Activated CD4-positive, alpha-beta T cell treated with anti-CD3 and anti-CD28 coated beads, Interleukin-2, amount 10 ng/mL, durations not matched to agents 7 days and 5 days (primary cell): ENCODE measurements at regions of chr6 and their contacts with region 1.

Region 1: DNA sequence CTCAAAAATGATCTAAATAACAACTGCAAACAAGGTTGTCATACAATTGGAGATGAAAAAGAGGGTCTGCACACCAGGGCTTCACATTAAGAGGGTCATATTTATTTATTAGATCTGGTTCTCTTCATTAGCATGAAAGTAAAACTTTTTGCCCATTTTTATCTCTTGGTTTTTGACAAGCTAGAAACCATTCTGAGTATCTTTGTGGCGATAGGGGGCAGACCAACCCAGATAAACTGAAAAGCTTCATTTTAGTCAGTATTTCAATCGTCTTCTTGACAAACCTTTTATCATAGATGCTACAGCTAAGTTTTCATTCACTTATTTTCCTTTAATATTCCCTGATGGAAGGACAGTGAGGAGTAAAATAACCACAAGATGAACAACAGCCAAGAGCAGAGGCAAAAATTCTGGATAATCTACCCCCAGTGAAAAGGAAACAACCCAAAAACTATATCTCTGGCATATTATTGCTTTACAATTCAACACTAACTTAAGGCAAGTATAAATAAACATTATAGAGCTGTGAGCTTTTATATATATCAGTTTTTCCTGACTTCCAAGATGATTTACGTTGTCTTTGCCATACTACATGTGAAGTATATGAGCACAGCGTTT is 45.2 kb downstream of the THEMIS start:
- DNase-seq: peak; percentile 55
- H3K4me3 Mint-ChIP-seq: no peak overlapping the region
- H3K27ac Mint-ChIP-seq: peak overlapping the region; percentile 44
- H3K4me1 Mint-ChIP-seq: peaks cover 57% of the 10 kb centered on the region
- H3K27me3 Mint-ChIP-seq: no peaks in the 10 kb centered on the region

Region 2: GRCh38 chr6:127844529-127844928 is 11.1 kb before region 1 on chr6:
- CTCF ChIA-PET with region 1: interaction called, 13 read pairs
- POLR2A ChIA-PET with region 1: no interaction called
- DNase-seq: no peak
- H3K4me3 Mint-ChIP-seq: no peak overlapping the region
- H3K27ac Mint-ChIP-seq: no peak overlapping the region
- H3K4me1 Mint-ChIP-seq: peaks cover 27% of the 10 kb centered on the region
- H3K27me3 Mint-ChIP-seq: no peaks in the 10 kb centered on the region

Region 3: DNA sequence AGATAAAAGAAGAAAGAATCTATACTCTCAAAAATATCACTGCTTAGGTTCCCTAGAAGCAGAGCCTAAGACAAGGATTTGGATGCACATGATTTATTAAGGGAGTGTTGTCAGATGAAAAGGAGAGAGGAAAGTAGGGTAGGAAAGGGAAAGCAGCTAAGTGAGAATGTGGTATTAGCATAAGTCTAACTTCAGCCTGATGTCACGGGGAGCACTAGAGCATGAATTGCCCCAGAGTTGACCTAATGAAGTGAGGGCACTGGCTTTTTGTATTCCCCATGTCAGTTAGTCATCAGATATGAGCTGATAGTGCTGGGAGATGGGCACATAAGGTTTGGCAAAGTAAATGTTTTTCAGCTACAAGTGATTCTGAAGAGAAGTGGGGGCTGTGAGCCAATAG is 174.2 kb after region 1 on chr6:
- CTCF ChIA-PET with region 1: no interaction called
- POLR2A ChIA-PET with region 1: no interaction called
- DNase-seq: no peak
- H3K4me3 Mint-ChIP-seq: no peak overlapping the region
- H3K27ac Mint-ChIP-seq: no peak overlapping the region
- H3K4me1 Mint-ChIP-seq: peaks cover 27% of the 10 kb centered on the region
- H3K27me3 Mint-ChIP-seq: no peaks in the 10 kb centered on the region

Region 4: DNA sequence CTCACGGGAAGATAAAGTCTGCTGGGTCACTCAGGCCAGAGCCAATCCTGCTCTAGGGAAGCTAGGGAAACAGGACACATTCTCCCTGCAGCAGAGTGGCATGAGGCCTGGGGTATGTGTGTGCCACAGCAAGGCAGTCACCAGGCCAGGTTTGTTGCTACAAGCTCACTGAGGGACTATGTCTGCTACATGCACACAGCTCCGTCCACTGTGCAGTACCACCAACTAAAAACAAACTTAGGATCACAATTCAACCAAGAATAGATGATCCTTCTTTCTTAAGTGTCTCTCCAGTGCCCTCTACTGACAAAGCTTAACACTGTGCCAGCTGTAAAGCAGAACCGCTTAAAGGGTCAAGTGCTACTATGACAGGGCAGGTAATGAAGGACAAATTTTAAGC is 472.2 kb after region 1 on chr6:
- CTCF ChIA-PET with region 1: interaction called, 10 read pairs
- POLR2A ChIA-PET with region 1: no interaction called
- DNase-seq: peak; percentile 52
- H3K4me3 Mint-ChIP-seq: no peak overlapping the region
- H3K27ac Mint-ChIP-seq: no peak overlapping the region
- H3K4me1 Mint-ChIP-seq: peaks cover 2% of the 10 kb centered on the region
- H3K27me3 Mint-ChIP-seq: no peaks in the 10 kb centered on the region